Ascending aorta (tissue), 2 donors: ENCODE measurements at regions of chr15 and their contacts with region 1.

Region 1: GRCh38 chr15:88745696-88746095 is 57.5 kb upstream of the ACAN start:
- DNase-seq: no peak
- H3K4me3 ChIP-seq: no peak overlapping the region
- H3K27ac ChIP-seq: peak overlapping the region; percentile 70 to 85
- H3K4me1 ChIP-seq: peaks cover 4 to 48% of the 10 kb centered on the region in 2 donors
- H3K27me3 ChIP-seq: no peaks in the 10 kb centered on the region
- CTCF ChIP-seq: no peak

Region 2: DNA sequence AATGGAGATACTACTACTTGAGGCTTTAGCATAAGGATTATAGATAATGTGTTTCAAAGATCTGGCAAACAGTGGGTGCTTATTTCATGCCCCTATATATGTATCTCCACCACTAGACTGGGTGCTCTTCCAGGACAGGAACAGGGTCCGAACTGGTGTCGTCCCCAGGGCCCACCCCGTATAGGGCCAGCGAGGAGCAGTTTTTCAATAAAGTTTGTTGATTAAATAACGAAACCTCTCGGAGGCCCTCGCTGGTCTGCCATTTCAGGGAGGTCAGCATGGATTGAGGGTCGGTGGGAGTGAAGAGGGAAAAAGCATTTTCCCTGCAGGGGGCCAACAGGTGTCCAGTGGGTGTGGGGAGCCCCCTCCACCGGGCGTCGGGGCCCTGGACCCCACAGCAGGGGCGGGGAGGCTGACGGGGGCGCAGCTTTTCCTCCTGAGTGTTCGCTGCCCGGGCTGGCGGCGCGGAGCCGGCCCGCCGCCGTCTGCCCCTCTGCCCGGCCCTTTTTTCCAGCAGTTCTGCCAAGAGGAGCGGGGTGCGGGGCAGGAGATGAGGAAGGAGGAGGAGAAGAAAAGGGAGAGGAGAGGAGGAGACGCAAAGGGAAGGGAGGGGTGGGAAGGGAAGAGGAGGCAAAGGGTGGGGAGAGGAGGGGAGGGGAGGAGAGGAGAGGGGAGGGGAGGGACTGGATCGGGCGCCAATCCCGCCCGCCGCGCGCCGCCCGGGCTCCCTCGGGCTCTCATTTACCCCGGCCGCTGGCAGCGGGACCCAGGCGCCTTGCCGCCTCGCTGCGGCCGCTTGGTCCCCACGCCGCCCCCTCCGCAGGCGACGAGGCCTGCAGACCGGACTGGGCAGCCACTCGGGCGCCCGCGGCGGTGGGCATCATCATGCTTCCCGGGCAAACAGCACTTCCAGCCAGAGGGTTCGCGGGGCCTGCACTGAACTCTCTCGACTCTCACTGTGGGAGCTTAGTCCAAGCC is 40.6 kb before region 1 on chr15:
- intact Hi-C with region 1: loop called (anchors 2 kb)
- DNase-seq: peak; percentile 29 to 92
- H3K4me3 ChIP-seq: peak overlapping the region; percentile 59 to 64
- H3K27ac ChIP-seq: peak overlapping the region; percentile 81 to 91
- H3K4me1 ChIP-seq: peaks cover 3 to 26% of the 10 kb centered on the region in 2 donors
- H3K27me3 ChIP-seq: no peaks in the 10 kb centered on the region
- CTCF ChIP-seq: no peak

Region 3: DNA sequence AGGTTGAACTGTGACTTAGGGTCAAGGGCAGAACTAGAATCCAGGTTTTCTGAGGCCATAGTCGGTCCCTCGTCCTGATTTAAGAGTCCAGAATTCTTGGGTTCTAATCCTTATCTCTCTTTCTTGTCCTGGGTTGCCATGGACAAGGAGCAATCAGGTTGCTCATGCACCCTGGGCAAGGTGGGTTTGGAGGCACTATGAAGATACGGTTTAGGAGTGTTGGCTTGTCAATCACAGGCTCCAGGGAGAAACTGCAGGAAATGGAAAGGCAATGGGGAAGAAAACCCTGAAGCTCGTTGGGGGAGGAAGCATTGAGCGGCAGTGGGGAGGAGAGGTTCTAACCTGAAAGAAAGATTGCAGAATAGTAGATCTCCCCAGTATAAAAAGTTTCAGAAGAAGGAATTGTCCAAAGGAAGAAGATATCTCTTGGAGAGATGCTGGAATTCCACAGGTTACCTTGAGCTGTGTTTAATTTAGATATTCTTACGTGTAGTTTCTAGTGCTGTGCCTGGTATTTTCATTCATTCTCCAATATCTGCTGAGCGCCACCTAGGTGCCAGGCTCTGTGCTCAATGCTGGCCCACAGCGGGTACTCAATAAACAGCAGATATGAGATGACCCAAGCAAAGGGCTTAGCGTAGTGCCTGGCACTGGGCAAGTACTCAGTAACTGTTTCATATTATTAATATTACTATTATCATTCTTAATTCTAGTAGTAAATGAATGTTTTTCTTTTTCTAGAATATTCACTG is 59.5 kb after region 1 on chr15:
- intact Hi-C with region 1: loop called (anchors 2 kb)
- DNase-seq: no peak
- H3K4me3 ChIP-seq: peak overlapping the region; percentile 60 to 87
- H3K27ac ChIP-seq: no peak overlapping the region
- H3K4me1 ChIP-seq: peaks cover 3 to 6% of the 10 kb centered on the region in 2 donors
- H3K27me3 ChIP-seq: no peaks in the 10 kb centered on the region
- CTCF ChIP-seq: no peak

Region 4: DNA sequence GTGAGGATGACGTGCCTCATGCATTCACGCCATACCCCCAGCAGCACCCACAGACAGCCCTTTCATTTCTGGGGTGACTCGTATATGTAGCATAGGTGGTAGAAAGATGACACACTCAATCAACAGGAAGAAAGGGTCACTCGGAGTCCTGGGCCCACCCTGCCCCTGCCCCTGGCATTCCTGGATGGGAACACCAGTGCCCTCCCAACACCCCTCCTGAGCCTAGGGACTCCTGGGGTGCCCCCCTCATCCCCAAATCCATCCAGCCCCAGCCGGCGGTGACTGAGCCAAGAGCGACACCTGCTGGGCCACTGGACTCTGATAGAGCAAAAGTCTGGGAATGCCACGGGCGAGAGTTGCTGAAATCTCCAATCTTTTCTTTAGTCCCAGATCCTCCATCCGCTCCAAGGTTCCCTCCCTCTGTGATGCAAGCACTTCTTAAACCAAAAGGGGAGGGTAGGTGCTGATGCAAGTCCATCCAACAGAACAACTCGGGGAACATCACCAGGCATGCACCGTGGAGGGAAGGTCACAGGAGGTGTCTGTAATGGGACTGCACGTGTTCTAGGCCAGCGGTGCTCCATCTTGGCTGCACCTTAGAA is 88.6 kb after region 1 on chr15:
- intact Hi-C with region 1: loop called (anchors 1 kb)
- DNase-seq: peak; percentile 15 to 85
- H3K4me3 ChIP-seq: no peak overlapping the region
- H3K27ac ChIP-seq: peak overlapping the region; percentile 74 to 82
- H3K4me1 ChIP-seq: peaks cover 0 to 16% of the 10 kb centered on the region in 2 donors
- H3K27me3 ChIP-seq: no peaks in the 10 kb centered on the region
- CTCF ChIP-seq: peak; percentile 79 to 90 (median 88)